Activated CD4-positive, alpha-beta T cell treated with anti-CD3 and anti-CD28 coated beads, Interleukin-2, amount 10 ng/mL, durations not matched to agents 24 days and 14 days (primary cell): ENCODE measurements at regions of chr12 and their contacts with region 1.

Region 1: DNA sequence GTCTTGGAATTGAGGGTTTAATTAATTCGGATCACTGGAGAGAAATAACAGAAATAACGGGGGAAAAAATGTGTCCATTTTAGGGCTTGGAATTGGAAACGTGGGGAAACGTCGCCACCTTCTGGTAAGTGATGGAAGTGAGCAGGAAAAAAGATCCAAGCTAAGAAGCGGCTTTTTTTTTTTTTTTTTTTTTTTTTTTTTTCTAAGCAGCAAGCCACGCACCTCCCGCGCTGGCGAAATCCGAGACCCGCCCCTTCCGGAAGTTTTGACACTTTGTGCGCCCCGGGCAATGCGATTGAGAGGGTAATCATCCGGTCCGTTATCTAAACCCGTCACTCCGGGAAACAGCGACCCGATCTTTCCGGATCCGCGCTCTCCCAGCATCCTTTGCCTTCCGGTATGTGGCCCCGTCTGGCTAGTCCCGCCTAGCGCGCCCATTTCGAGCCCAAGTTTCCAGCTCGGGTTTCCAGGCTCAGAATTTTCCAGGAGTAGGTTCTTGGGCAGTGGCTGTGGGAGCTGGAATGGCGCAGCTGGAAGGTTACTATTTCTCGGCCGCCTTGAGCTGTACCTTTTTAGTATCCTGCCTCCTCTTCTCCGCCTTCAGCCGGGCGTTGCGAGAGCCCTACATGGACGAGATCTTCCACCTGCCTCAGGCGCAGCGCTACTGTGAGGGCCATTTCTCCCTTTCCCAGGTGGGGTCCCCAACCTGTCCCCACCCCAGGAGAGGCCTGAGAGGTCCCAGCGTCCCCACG is at the start of gene ALG10:
- DNase-seq: peak; percentile 99
- H3K4me3 Mint-ChIP-seq: peak within 1 kb of the TSS; percentile 95
- H3K27ac Mint-ChIP-seq: peak within 1 kb of the TSS; percentile 98
- H3K4me1 Mint-ChIP-seq: peaks cover 17% of the 10 kb centered on the region
- H3K27me3 Mint-ChIP-seq: no peaks in the 10 kb centered on the region
- total RNA-seq, gene ALG10: 23.8 and 24.1 TPM in 2 replicates

Region 2: DNA sequence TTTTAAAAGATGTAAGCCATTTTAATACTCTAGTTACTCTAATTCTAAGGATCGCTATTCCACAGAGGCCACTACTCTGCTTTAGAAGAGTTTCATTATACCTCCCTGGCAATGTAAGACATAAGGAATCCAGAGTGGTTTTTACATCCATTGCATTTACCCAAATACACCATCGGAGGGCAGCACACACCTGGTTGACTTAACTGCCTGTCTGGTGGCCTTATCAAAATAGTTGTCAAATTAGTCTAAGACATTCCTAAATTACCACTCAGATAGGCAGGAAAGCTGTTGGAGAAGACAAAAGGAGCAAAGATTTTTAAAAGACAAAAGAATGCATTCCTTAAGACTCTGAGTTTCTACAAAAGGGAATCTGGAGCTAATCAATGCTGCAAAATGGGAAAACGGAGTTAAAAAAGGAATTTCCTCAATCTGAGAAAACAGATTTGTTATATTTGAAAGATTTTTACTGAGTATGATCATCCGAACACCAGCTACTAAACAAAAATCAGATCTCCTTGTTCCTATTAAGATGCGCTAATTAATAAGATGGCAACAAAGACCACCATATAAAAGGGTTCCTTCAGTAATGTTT is 1656.7 kb before region 1 on chr12:
- intact Hi-C with region 1: loop called (anchors 5 kb)
- DNase-seq: peak; percentile 81
- H3K4me3 Mint-ChIP-seq: no peak overlapping the region
- H3K27ac Mint-ChIP-seq: no peak overlapping the region
- H3K4me1 Mint-ChIP-seq: no peaks in the 10 kb centered on the region
- H3K27me3 Mint-ChIP-seq: no peaks in the 10 kb centered on the region

Region 3: GRCh38 chr12:32455607-32456071 is 1566.6 kb before region 1 on chr12:
- intact Hi-C with region 1: loop called (anchors 1 kb)
- DNase-seq: peak; percentile 76
- H3K4me3 Mint-ChIP-seq: no peak overlapping the region
- H3K27ac Mint-ChIP-seq: no peak overlapping the region
- H3K4me1 Mint-ChIP-seq: no peaks in the 10 kb centered on the region
- H3K27me3 Mint-ChIP-seq: peaks cover 7% of the 10 kb centered on the region

Region 4: GRCh38 chr12:32679091-32679919 is 1343.0 kb before region 1 on chr12 and contains the start of gene DNM1L:
- intact Hi-C with region 1: loop called (anchors 1 kb)
- DNase-seq: peak; percentile 98
- H3K4me3 Mint-ChIP-seq: peak within 1 kb of the TSS; percentile 88
- H3K27ac Mint-ChIP-seq: peak within 1 kb of the TSS; percentile 93
- H3K4me1 Mint-ChIP-seq: peaks cover 21% of the 10 kb centered on the region
- H3K27me3 Mint-ChIP-seq: no peaks in the 10 kb centered on the region
- total RNA-seq, gene DNM1L: 83.3 and 90.7 TPM in 2 replicates

Region 5: DNA sequence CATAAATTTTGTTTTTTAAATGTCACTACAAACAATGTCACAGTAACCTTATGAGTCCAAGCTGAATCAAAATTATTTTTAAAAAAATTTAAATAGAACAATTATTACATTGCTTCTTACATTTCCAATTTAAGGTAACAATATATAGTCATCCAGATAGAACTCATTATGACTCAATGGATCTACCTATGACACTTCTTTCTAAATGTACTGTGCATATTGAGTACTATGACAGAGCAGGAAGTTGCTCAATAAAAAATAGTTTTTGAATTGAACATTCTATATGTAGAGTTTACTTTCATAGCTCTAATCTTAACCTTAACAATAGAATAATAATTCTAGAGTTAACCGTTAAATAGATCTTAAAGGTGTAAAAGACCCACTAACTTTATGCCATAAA is 44.4 kb before region 1 on chr12:
- intact Hi-C with region 1: no loop called
- DNase-seq: no peak
- H3K4me3 Mint-ChIP-seq: no peak overlapping the region
- H3K27ac Mint-ChIP-seq: no peak overlapping the region
- H3K4me1 Mint-ChIP-seq: no peaks in the 10 kb centered on the region
- H3K27me3 Mint-ChIP-seq: no peaks in the 10 kb centered on the region

Region 6: DNA sequence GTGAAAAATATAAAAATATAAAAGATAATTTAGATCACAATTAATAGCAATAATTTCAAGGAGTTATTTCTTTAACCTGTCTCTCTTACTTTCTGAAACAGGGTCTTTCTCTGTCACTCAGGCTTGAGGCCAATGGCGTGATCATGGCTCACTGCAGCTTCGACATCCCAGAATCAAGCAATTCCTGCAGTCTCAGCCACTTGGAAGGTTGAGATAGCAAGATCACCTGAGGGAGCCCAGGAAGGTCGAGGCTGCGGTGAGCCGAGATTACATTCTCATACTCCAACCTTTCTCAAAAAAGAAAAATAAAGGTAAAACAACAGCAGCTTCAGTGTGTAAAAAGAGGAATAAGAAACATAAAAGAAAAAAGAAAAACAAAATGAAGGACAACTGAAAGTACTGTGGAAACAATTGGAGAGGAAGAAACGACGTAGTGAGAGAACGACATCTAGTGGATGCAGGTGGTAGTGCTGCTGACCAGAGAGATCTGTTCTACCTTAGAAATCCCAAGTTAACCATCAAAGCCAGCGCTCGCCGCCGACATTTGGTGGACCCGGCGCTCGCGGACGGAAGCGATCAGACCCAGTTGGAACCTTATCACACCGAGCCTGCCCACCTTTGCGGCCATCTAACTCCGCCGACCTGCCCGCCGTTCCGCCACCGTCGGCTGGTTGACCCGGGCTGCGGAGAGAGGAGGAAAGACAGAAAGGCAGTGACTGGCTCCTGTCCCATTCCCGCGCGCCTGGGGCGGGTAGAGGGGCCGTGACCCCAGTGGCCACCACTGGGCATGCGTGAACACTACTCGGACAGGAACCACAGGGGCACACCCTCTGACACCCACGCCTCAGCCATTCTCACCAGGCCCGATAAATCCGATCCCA is 196.2 kb after region 1 on chr12:
- intact Hi-C with region 1: loop called (anchors 5 kb)
- DNase-seq: peak; percentile 91
- H3K4me3 Mint-ChIP-seq: peak overlapping the region; percentile 89
- H3K27ac Mint-ChIP-seq: peak overlapping the region; percentile 80
- H3K4me1 Mint-ChIP-seq: peaks cover 8% of the 10 kb centered on the region
- H3K27me3 Mint-ChIP-seq: peaks cover 9% of the 10 kb centered on the region